MCF 10A (cell line): ENCODE measurements at regions of chr15 and their contacts with region 1.

Region 1: DNA sequence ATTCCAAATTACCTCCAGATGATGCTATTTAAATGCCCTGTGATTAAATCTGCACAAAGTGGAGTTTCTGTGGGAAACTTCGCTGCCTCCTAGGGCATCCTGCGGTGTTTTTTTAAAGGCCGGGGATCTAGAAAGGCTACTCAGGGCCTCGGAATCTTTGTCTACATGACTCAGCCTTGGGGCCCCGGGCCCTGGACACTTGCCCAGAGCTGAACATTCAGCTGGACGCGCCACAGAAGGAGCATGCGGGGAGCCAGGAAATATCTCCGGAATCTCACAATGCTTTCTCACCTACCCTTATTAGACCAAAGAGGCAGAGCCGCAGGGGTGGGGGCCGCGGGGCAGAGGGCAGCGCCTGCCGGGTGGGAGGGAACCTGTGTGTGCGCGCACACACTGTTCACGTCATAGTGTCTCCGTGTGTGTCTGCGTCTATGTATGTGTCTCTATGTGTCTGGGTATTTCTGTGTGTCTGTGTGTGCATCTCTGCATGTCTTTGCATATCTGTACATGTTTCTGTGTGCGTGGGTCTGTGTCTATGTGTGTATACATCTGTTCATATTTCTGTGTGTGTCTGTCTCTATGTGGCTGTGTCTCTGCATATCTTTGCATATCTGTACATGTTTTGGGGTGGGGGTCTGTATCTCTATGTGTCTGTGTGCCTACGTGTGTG is 145.4 kb upstream of the TPM1 start:
- DNase-seq: peak; percentile 98
- H3K4me3 Mint-ChIP-seq: peak overlapping the region; percentile 69
- H3K27ac Mint-ChIP-seq: peak overlapping the region; percentile 90
- H3K4me1 Mint-ChIP-seq: peaks cover 63% of the 10 kb centered on the region
- H3K27me3 Mint-ChIP-seq: no peaks in the 10 kb centered on the region
- CTCF ChIP-seq: no peak

Region 2: GRCh38 chr15:62853114-62853832 is 43.8 kb before region 1 on chr15:
- CTCF ChIA-PET with region 1: interaction called, 3 read pairs
- POLR2A ChIA-PET with region 1: interaction called, 11 read pairs
- intact Hi-C with region 1: loop called (anchors 2 kb)
- DNase-seq: peak; percentile 67
- H3K4me3 Mint-ChIP-seq: no peak overlapping the region
- H3K27ac Mint-ChIP-seq: no peak overlapping the region
- H3K4me1 Mint-ChIP-seq: peaks cover 31% of the 10 kb centered on the region
- H3K27me3 Mint-ChIP-seq: no peaks in the 10 kb centered on the region
- CTCF ChIP-seq: no peak

Region 3: GRCh38 chr15:62922514-62922913 is 25.4 kb after region 1 on chr15:
- CTCF ChIA-PET with region 1: interaction called, 3 read pairs
- POLR2A ChIA-PET with region 1: interaction called, 11 read pairs
- intact Hi-C with region 1: no loop called
- DNase-seq: no peak
- H3K4me3 Mint-ChIP-seq: no peak overlapping the region
- H3K27ac Mint-ChIP-seq: peak overlapping the region; percentile 73
- H3K4me1 Mint-ChIP-seq: peaks cover 29% of the 10 kb centered on the region
- H3K27me3 Mint-ChIP-seq: no peaks in the 10 kb centered on the region
- CTCF ChIP-seq: no peak

Region 4: DNA sequence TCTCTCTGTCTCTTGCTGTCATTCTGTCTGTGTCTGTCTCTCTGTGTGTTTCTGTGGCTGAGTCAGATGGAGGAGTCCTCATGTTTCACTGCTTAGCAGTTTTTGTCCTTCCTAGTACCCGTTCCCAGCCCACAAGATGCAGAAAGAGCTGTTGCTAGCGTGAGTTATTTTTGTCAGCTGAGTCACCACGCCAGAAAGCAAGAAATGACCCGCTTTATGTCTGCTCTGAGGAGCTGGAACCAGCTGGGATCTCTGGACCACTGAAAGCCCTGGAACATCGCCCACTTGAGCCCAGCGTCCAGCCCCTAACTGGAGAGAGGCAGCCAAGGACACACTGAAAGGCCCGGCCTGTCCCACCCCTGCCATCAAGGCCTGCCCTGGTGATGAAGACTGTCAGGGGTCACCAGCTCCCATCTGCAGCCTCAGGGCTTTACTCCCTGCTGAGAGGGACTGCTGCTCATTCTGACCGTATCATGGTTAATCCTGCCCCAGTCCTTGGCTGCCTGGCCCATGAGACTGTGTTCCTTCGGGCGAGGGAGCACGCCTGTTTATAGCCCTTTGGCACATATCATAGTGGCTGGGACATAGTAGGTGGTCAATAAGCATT is 43.7 kb after region 1 on chr15:
- CTCF ChIA-PET with region 1: interaction called, 4 read pairs
- POLR2A ChIA-PET with region 1: interaction called, 8 read pairs
- intact Hi-C with region 1: loop called (anchors 5 kb)
- DNase-seq: peak; percentile 90
- H3K4me3 Mint-ChIP-seq: no peak overlapping the region
- H3K27ac Mint-ChIP-seq: peak overlapping the region; percentile 9
- H3K4me1 Mint-ChIP-seq: peaks cover 20% of the 10 kb centered on the region
- H3K27me3 Mint-ChIP-seq: no peaks in the 10 kb centered on the region
- CTCF ChIP-seq: no peak

Region 5: DNA sequence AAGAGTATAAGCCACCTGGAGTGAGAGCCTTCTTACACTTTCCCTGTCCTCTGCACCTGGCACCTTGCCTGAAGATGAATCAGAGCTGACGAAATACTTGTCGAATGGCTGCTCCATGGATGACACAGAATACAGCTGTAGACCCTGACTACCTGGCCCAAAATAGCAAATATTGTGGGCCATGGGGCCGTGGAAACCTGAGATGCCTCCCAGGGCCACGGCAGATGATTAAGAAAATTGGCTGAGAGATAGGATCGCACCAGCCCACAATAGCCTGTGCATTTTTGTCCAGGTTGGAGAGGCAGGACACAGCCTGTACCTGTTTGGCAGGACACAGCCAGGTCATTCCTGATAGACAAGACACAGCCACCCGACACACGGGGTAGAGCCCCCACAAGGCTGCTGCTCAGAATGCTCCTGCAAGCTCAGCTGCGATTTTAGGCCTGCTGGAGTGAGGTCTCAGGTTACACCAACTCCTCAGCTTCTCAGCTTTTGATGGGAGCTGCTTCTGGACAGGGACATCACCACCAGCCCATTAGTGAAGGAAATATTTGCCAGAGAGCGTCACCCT is 122.5 kb after region 1 on chr15:
- CTCF ChIA-PET with region 1: no interaction called
- POLR2A ChIA-PET with region 1: interaction called, 4 read pairs
- intact Hi-C with region 1: loop called (anchors 2 kb)
- DNase-seq: peak; percentile 98
- H3K4me3 Mint-ChIP-seq: peak overlapping the region; percentile 26
- H3K27ac Mint-ChIP-seq: peak overlapping the region; percentile 66
- H3K4me1 Mint-ChIP-seq: peaks cover 32% of the 10 kb centered on the region
- H3K27me3 Mint-ChIP-seq: no peaks in the 10 kb centered on the region
- CTCF ChIP-seq: no peak